K562 (cell line): ENCODE measurements at regions of chr17 and their contacts with region 1.

Region 1: DNA sequence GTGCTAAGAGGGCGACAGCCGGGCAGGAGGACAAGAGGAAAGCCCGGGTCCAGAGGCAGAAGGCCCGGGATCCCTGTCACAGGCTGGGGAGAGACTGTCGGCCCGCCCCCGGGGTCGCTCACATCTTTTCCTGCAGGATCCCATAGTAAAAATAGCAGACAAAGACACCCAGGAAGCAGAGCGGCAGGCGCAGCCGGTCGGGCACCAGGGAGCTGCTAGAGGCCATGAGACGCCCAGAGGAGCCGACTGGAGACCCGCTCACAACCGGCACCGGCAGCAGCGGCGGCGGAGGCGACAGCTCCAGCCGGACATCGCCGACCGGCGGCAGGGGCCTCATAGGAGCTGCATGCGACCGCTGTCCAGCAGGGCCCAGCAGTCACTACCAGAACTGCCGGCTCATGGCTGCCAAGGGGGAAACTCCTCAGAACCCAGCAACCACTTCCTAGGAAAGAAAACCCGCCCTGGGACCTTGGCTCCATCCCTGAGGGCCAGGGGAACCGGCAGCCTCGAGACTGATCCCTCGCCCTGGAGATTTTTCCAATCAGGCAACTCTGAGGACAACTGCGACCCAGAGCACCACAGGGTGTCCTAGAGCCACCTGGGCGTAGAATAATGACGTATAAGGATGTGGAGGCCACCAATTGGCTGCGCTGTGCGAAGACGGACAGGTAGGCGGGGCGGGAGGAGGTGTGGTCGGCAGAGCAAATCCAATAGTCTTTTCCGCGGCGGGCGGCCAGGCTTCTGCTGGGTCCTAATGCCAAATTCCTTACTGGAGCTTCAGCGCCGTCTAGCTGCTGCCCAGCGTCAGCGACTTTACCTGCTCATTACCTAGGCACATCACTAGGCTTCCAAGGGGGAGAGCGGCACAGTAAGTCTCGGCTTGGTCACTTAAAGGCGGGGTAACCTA is at the start of gene SLC35B1:
- DNase-seq: peak; percentile 96 to 99 (median 98)
- ATAC-seq: peak; percentile 96
- H3K4me3 ChIP-seq: peak within 1 kb of the TSS; percentile 85
- H3K27ac ChIP-seq: peak within 1 kb of the TSS; percentile 98
- H3K4me1 ChIP-seq: peaks cover 6 to 18% of the 10 kb centered on the region in 2 experiments; a peak in 4 of 5 replicates
- H3K27me3 ChIP-seq: no peaks in the 10 kb centered on the region
- CTCF ChIP-seq: peak; percentile 96 to 99 (median 96)
- EP300 ChIP-seq: no peak
- POLR2A ChIP-seq: peak; percentile 84
- RAD21 ChIP-seq: peak; percentile 77 to 81
- polyA plus RNA-seq, gene SLC35B1: 62.0 to 64.4 TPM

Region 2: GRCh38 chr17:49567871-49568694 is 139.8 kb before region 1 on chr17:
- CTCF ChIA-PET with region 1: interaction called, 20 read pairs
- POLR2A ChIA-PET with region 1: interaction called, 5 read pairs
- in situ Hi-C with region 1: no loop called
- intact Hi-C with region 1: no loop called
- DNase-seq: peak; percentile 63 to 86 (median 70)
- ATAC-seq: peak; percentile 75
- H3K4me3 ChIP-seq: no peak overlapping the region
- H3K27ac ChIP-seq: no peak overlapping the region
- H3K4me1 ChIP-seq: peaks cover 0 to 24% of the 10 kb centered on the region in 2 experiments; a peak in 4 of 5 replicates
- H3K27me3 ChIP-seq: peaks cover 11 to 42% of the 10 kb centered on the region in 2 experiments; a peak in 3 of 5 replicates
- CTCF ChIP-seq: peak; percentile 94 to 97 (median 95)
- EP300 ChIP-seq: no peak
- POLR2A ChIP-seq: no peak
- RAD21 ChIP-seq: peak; percentile 88 to 94

Region 3: GRCh38 chr17:49763735-49764558 is 56.1 kb after region 1 on chr17 and contains the start of gene FAM117A:
- CTCF ChIA-PET with region 1: no interaction called
- POLR2A ChIA-PET with region 1: interaction called, 6 read pairs
- in situ Hi-C with region 1: no loop called
- intact Hi-C with region 1: loop called (anchors 1 kb)
- DNase-seq: peak; percentile 99 to 100 (median 99)
- ATAC-seq: peak; percentile 95
- H3K4me3 ChIP-seq: peak within 1 kb of the TSS; percentile 69
- H3K27ac ChIP-seq: peak within 1 kb of the TSS; percentile 71
- H3K4me1 ChIP-seq: peaks cover 8 to 48% of the 10 kb centered on the region in 2 experiments
- H3K27me3 ChIP-seq: no peaks in the 10 kb centered on the region
- CTCF ChIP-seq: no peak
- EP300 ChIP-seq: no peak
- POLR2A ChIP-seq: peak; percentile 80
- RAD21 ChIP-seq: no peak
- polyA plus RNA-seq, gene FAM117A: 3.1 to 4.7 TPM

Region 4: DNA sequence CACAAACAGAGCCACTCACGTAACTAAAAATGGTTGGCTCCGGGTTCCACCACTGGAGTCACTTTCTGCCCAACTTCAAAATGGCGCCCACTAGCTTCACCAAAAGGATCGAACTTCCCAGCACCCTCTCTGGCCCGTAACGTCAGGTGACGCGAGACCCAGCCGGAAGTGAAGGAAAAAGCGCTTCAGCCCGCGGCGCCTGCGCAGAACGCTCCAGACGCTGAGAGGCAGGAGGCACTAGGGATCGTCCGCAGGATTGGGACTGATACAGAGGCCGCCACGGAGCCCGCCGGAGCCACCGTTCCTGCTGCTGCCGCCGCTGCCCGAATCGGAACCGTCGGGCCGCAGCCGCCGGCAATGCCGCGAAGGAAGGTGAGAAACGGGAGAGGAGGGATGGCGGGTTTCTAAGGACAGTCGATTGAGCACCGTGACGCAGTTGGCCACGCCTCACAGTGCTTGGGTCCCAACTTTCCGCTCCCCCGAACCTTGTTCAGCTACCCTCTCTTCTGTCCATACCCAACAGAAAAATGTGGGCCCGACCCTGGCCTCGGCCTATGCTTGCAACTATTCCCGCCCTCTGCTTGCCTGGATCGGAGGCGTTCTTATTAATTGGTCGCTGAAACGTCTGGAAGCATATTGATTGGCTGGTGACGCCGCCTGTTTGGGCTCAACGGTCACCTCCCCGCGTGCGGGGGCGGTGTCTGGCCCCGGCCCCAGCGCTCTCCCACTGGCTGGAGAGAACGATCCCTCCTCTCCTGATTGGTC is 80.8 kb after region 1 on chr17 and contains the start of gene KAT7:
- CTCF ChIA-PET with region 1: interaction called, 4 read pairs
- POLR2A ChIA-PET with region 1: interaction called, 4 read pairs
- in situ Hi-C with region 1: loop called (anchors 5 kb)
- intact Hi-C with region 1: no loop called
- DNase-seq: peak; percentile 98 to 99 (median 98)
- ATAC-seq: peak; percentile 97
- H3K4me3 ChIP-seq: peak within 1 kb of the TSS; percentile 95
- H3K27ac ChIP-seq: peak within 1 kb of the TSS; percentile 100
- H3K4me1 ChIP-seq: peaks cover 10 to 17% of the 10 kb centered on the region in 2 experiments
- H3K27me3 ChIP-seq: no peaks in the 10 kb centered on the region
- CTCF ChIP-seq: no peak
- EP300 ChIP-seq: peak; percentile 37; the same call in 1 of the 2 replicates
- POLR2A ChIP-seq: peak; percentile 99
- RAD21 ChIP-seq: 0 out of 4 replicates have a peak, but pooled peaks of 1 of the 2 experiments have one; percentile 17
- polyA plus RNA-seq, gene KAT7: 10.8 to 10.9 TPM

Region 5: GRCh38 chr17:49839455-49839854 is 131.6 kb after region 1 on chr17:
- CTCF ChIA-PET with region 1: no interaction called
- POLR2A ChIA-PET with region 1: no interaction called
- in situ Hi-C with region 1: no loop called
- intact Hi-C with region 1: no loop called
- DNase-seq: no peak
- ATAC-seq: no peak
- H3K4me3 ChIP-seq: no peak overlapping the region
- H3K27ac ChIP-seq: no peak overlapping the region
- H3K4me1 ChIP-seq: peaks cover 9% of the 10 kb centered on the region in 2 experiments; a peak in 4 of 5 replicates
- H3K27me3 ChIP-seq: no peaks in the 10 kb centered on the region
- CTCF ChIP-seq: no peak
- EP300 ChIP-seq: no peak
- POLR2A ChIP-seq: no peak
- RAD21 ChIP-seq: no peak

Region 6: DNA sequence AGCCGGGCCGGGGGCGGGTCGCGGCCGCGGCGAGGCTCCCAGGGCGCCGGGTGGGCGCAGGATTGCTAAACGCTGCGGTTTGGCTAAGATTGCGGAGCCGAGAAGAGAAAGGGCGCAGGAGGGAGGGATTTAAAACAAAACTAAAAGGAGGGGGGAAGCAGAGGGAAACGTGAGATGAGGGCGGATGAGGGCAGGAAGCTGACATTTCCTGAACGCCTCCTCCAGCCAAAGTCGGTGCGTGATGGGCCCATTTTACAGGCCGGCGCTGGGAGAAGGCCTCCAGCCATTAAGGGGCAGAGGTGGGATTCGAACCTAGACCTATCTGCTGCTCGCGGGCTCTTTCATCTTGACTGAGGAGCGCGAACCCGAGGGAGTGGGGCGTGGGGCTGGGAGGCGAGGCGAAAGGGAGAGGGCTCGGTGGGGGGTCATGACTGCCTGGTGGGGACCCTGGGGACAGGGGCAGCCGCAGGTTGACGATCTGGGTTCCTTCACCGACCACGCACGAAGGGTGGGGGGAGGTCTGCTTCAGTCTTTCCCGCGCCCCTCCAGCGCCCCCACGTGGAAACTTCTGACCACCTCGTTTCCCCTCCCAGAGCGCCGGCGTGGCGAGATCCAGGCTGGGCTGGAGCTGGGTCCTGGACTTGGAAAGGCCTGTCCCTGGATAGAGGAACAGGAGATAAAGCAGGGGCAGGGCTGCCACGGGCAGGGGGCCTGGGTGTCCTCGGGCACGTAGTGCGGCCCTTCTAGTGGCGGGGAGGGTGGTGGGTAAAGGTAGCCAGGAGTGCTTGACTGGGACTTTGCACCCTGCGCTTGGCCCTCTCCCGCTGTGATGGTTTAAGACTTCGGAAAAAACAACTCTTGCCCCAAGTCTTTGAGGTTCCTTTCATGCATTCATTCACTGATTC is 143.8 kb after region 1 on chr17:
- CTCF ChIA-PET with region 1: no interaction called
- POLR2A ChIA-PET with region 1: interaction called, 7 read pairs
- in situ Hi-C with region 1: loop called (anchors 5 kb)
- intact Hi-C with region 1: loop called (anchors 5 kb)
- DNase-seq: peak; percentile 74 to 84 (median 82)
- ATAC-seq: peak; percentile 93
- H3K4me3 ChIP-seq: peak overlapping the region; percentile 49
- H3K27ac ChIP-seq: no peak overlapping the region
- H3K4me1 ChIP-seq: peaks cover 0 to 15% of the 10 kb centered on the region in 2 experiments; a peak in 2 of 5 replicates
- H3K27me3 ChIP-seq: peaks cover 3 to 24% of the 10 kb centered on the region in 2 experiments; a peak in 4 of 5 replicates
- CTCF ChIP-seq: peak; percentile 77 to 85 (median 79)
- EP300 ChIP-seq: no peak
- POLR2A ChIP-seq: no peak
- RAD21 ChIP-seq: peak; percentile 70 to 78